AG04450 (cell line): ENCODE measurements at regions of chr3 and their contacts with region 1.

Region 1: GRCh38 chr3:43503067-43503728 is 118.6 kb downstream of the ANO10 start:
- DNase-seq: no peak
- H3K4me3 ChIP-seq: no peak overlapping the region
- H3K27ac ChIP-seq: no peak overlapping the region
- H3K27me3 ChIP-seq: no peaks in the 10 kb centered on the region
- CTCF ChIP-seq: peak; percentile 56

Region 2: GRCh38 chr3:43162230-43163084 is 340.7 kb before region 1 on chr3:
- CTCF ChIA-PET with region 1: interaction called, 35 read pairs
- POLR2A ChIA-PET with region 1: no interaction called
- DNase-seq: peak; percentile 37
- H3K4me3 ChIP-seq: no peak overlapping the region
- H3K27ac ChIP-seq: no peak overlapping the region
- H3K27me3 ChIP-seq: peaks cover 4% of the 10 kb centered on the region
- CTCF ChIP-seq: peak; percentile 51

Region 3: GRCh38 chr3:43223670-43224364 is 279.4 kb before region 1 on chr3:
- CTCF ChIA-PET with region 1: interaction called, 20 read pairs
- POLR2A ChIA-PET with region 1: no interaction called
- DNase-seq: no peak
- H3K4me3 ChIP-seq: no peak overlapping the region
- H3K27ac ChIP-seq: no peak overlapping the region
- H3K27me3 ChIP-seq: no peaks in the 10 kb centered on the region
- CTCF ChIP-seq: peak; percentile 56